ENCODE measurements at regions of chr7 and their contacts with region 1.

Region 1: GRCh38 chr7:51727441-51727840 is 410.8 kb upstream of the COBL start:
- DNase-seq: no peak
- ATAC-seq: no peak

Region 2: GRCh38 chr7:51315393-51316261 is 411.8 kb before region 1 on chr7:
- intact Hi-C with region 1: no loop called
- DNase-seq: no peak
- ATAC-seq: peak; percentile 69

Region 3: GRCh38 chr7:51666751-51667150 is 60.7 kb before region 1 on chr7:
- intact Hi-C with region 1: loop called (anchors 10 kb)
- DNase-seq: no peak
- ATAC-seq: no peak

Measured in Right ventricle myocardium superior (tissue), 1 donor.